ENCODE measurements at regions of chr20 and their contacts with region 1.

Region 1: DNA sequence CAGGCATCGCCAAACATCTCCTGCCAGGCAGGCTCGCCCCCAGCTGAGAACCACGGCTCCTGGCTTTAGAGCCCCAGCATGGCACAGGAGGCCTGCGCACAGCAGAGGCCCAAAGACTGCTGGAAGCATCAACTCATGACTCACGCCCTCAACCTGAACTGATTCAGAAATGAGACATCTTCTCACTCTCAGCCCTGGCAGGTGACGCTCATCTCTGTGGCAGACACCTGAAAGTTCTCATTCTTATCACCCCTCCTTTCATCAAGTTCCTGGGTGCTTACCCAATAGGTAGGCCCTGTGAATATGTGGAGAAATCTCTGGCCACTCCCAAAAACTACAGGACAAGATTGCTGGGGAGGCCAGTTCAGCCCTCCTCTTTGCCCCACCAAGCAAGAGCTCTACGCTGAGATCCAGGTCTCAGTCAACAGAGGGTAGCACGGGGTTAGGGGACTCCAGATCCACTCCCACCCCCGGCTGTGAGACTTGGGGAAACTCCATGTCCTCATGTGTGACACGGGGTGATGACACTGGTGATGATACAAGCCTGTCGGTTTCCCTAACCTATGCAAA is 11.3 kb downstream of the NFATC2 start:
- DNase-seq: peak; percentile 44
- H3K4me3 Mint-ChIP-seq: peak overlapping the region; percentile 82
- H3K27ac Mint-ChIP-seq: peak overlapping the region; percentile 99
- H3K4me1 Mint-ChIP-seq: peaks cover 84% of the 10 kb centered on the region
- H3K27me3 Mint-ChIP-seq: no peaks in the 10 kb centered on the region

Region 2: GRCh38 chr20:51500311-51500710 is 30.9 kb before region 1 on chr20:
- intact Hi-C with region 1: loop called (anchors 1 kb)
- DNase-seq: peak; percentile 46
- H3K4me3 Mint-ChIP-seq: no peak overlapping the region
- H3K27ac Mint-ChIP-seq: peak overlapping the region; percentile 79
- H3K4me1 Mint-ChIP-seq: peaks cover 74% of the 10 kb centered on the region
- H3K27me3 Mint-ChIP-seq: no peaks in the 10 kb centered on the region

Measured in activated T-helper 2 cell treated with anti-CD3 and anti-CD28 coated beads, Interferon-gamma antibody, Interleukin-2, Interleukin-4, amounts not matched to agents 10 μg/mL and 5 μg/mL and 100 μg/mL, durations not matched to agents 14 hours and 24 hours and 36 hours (primary cell).